ENCODE measurements at regions of chr3 and their contacts with region 1.

Region 1: GRCh38 chr3:185659942-185660921 is 74.1 kb downstream of the SENP2 start:
- DNase-seq: peak; percentile 78
- ATAC-seq: peak; percentile 89
- H3K4me3 Mint-ChIP-seq: no peak overlapping the region
- H3K27ac Mint-ChIP-seq: no peak overlapping the region
- H3K4me1 Mint-ChIP-seq: peaks cover 4% of the 10 kb centered on the region
- H3K27me3 Mint-ChIP-seq: peaks cover 17% of the 10 kb centered on the region

Region 2: GRCh38 chr3:185645596-185646381 is 14.4 kb before region 1 on chr3:
- CTCF ChIA-PET with region 1: interaction called, 19 read pairs
- POLR2A ChIA-PET with region 1: interaction called, 3 read pairs
- DNase-seq: no peak
- ATAC-seq: no peak
- H3K4me3 Mint-ChIP-seq: no peak overlapping the region
- H3K27ac Mint-ChIP-seq: no peak overlapping the region
- H3K4me1 Mint-ChIP-seq: no peaks in the 10 kb centered on the region
- H3K27me3 Mint-ChIP-seq: peaks cover 6% of the 10 kb centered on the region

Region 3: GRCh38 chr3:185677146-185677829 is 17.1 kb after region 1 on chr3:
- CTCF ChIA-PET with region 1: interaction called, 41 read pairs
- POLR2A ChIA-PET with region 1: no interaction called
- DNase-seq: peak; percentile 29
- ATAC-seq: no peak
- H3K4me3 Mint-ChIP-seq: no peak overlapping the region
- H3K27ac Mint-ChIP-seq: no peak overlapping the region
- H3K4me1 Mint-ChIP-seq: no peaks in the 10 kb centered on the region
- H3K27me3 Mint-ChIP-seq: peaks cover 37% of the 10 kb centered on the region

Region 4: GRCh38 chr3:185770109-185770508 is 109.9 kb after region 1 on chr3:
- CTCF ChIA-PET with region 1: interaction called, 59 read pairs
- POLR2A ChIA-PET with region 1: no interaction called
- DNase-seq: no peak
- ATAC-seq: no peak
- H3K4me3 Mint-ChIP-seq: no peak overlapping the region
- H3K27ac Mint-ChIP-seq: no peak overlapping the region
- H3K4me1 Mint-ChIP-seq: peaks cover 5% of the 10 kb centered on the region
- H3K27me3 Mint-ChIP-seq: peaks cover 10% of the 10 kb centered on the region